Activated T-helper 2 cell treated with anti-CD3 and anti-CD28 coated beads, Interferon-gamma antibody, Interleukin-2, Interleukin-4, amounts not matched to agents 10 μg/mL and 5 μg/mL and 100 μg/mL, durations not matched to agents 14 hours and 24 hours and 36 hours (primary cell): ENCODE measurements at regions of chr12 and their contacts with region 1.

Region 1: DNA sequence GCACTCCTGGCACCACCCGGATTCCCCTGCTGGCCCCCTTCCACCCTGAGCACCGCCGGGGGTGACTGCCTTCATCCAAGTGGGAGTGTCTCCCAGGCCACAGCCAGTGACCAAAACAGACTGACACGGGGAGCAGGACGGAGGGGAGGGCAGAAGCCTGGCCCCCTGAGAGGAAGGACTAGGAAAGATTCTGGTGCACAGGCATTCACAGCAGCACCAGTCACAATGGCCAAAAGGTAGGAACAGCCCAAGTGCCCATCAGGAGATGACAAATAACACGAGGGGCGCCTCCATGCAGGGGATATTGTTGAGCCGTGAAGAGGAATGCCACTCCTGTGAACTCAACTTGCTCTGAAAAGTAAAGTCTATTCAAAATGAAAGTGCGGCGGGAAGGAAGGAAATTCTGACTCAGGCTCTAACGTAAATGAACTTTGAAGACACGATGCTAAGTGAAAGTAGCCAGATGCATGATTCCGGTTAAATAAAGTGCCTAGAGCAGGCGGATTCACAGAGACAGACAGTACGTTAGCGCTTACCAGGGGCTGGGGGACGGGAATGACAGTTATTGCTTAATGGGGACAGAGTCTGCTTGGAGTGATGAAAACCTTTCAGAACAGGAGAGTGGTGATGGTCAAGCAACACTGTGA is 146.1 kb upstream of the NCOR2 start:
- DNase-seq: peak; percentile 58
- H3K4me3 Mint-ChIP-seq: peak overlapping the region; percentile 56
- H3K27ac Mint-ChIP-seq: peak overlapping the region; percentile 86
- H3K4me1 Mint-ChIP-seq: peaks cover 17% of the 10 kb centered on the region
- H3K27me3 Mint-ChIP-seq: peaks cover 1% of the 10 kb centered on the region

Region 2: DNA sequence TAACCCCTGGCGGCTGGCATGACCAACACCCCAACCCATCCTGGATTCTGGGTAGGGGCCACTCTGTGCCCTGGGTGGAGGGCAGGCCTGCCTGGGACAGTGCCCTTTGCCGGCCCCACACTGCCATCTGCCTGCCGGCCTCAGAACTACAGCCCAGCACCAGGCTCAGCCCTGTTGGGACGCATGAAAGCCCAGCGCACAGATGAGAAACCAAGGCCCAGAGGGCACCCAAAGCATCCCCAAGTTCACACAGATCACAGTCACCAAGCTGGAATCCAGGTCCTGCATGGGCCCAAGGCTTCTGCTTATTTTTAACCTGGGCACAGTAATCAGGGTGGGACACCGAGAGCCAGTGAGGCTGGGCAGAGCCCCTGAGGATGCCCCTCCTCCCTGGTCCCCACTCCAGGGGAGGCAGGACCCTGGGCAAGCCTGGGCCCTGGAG is 392.5 kb before region 1 on chr12:
- intact Hi-C with region 1: no loop called
- DNase-seq: peak; percentile 53
- H3K4me3 Mint-ChIP-seq: no peak overlapping the region
- H3K27ac Mint-ChIP-seq: no peak overlapping the region
- H3K4me1 Mint-ChIP-seq: no peaks in the 10 kb centered on the region
- H3K27me3 Mint-ChIP-seq: no peaks in the 10 kb centered on the region

Region 3: GRCh38 chr12:124338436-124338835 is 375.1 kb before region 1 on chr12:
- intact Hi-C with region 1: no loop called
- DNase-seq: no peak
- H3K4me3 Mint-ChIP-seq: no peak overlapping the region
- H3K27ac Mint-ChIP-seq: peak overlapping the region; percentile 50
- H3K4me1 Mint-ChIP-seq: no peaks in the 10 kb centered on the region
- H3K27me3 Mint-ChIP-seq: no peaks in the 10 kb centered on the region

Region 4: GRCh38 chr12:124453419-124454351 is 259.9 kb before region 1 on chr12:
- intact Hi-C with region 1: loop called (anchors 1 kb)
- DNase-seq: peak; percentile 76
- H3K4me3 Mint-ChIP-seq: peak overlapping the region; percentile 51
- H3K27ac Mint-ChIP-seq: peak overlapping the region; percentile 67
- H3K4me1 Mint-ChIP-seq: peaks cover 35% of the 10 kb centered on the region
- H3K27me3 Mint-ChIP-seq: no peaks in the 10 kb centered on the region

Region 5: GRCh38 chr12:124567661-124568373 is 145.7 kb before region 1 on chr12:
- intact Hi-C with region 1: loop called (anchors 1 kb)
- DNase-seq: peak; percentile 75
- H3K4me3 Mint-ChIP-seq: peak overlapping the region; percentile 78
- H3K27ac Mint-ChIP-seq: peak overlapping the region; percentile 78
- H3K4me1 Mint-ChIP-seq: peaks cover 10% of the 10 kb centered on the region
- H3K27me3 Mint-ChIP-seq: peaks cover 3% of the 10 kb centered on the region

Region 6: GRCh38 chr12:124599074-124599999 is 114.2 kb before region 1 on chr12:
- intact Hi-C with region 1: loop called (anchors 2 kb)
- DNase-seq: no peak
- H3K4me3 Mint-ChIP-seq: no peak overlapping the region
- H3K27ac Mint-ChIP-seq: peak overlapping the region; percentile 20
- H3K4me1 Mint-ChIP-seq: peaks cover 8% of the 10 kb centered on the region
- H3K27me3 Mint-ChIP-seq: peaks cover 41% of the 10 kb centered on the region

Region 7: DNA sequence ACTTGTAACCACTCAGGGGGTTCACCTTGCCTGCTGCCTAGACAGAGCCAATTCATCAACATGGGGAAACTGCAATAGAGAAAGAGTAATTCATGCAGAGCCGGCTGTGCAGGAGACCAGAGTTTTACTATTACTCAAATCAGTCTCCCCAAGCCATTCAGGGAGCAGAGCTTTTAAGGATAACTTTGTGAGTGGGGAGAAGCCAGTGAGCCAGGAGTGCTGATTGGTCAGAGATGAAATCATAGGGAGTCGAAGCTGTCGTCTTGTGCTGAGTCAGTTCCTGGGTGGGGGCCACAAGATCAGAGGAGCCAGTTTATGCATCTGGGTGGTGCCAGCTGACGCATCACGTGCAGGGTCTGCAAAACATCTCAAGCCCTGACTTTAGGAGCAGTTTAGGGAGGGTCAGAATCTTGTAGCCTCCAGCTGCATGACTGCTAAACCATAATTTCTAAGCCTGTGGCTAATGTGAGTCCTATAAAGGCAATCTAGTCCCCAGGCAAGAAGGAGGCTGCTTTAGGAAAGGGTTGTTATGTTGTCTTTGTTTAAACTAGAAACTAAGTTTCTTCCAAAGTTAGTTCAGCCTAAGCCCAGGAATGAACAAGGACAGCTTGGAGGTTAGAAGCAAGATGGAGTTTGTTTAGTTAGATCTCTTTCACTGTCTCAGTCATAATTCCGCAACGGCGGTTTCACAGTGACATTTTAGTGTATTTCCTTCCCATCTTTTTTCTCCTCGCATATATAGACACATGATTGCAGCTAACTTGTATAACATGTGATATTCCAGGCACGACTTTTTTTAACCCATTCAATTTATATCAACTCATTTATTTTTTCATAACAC is 77.2 kb before region 1 on chr12:
- intact Hi-C with region 1: loop called (anchors 1 kb)
- DNase-seq: peak; percentile 55
- H3K4me3 Mint-ChIP-seq: no peak overlapping the region
- H3K27ac Mint-ChIP-seq: no peak overlapping the region
- H3K4me1 Mint-ChIP-seq: peaks cover 10% of the 10 kb centered on the region
- H3K27me3 Mint-ChIP-seq: peaks cover 11% of the 10 kb centered on the region

Region 8: DNA sequence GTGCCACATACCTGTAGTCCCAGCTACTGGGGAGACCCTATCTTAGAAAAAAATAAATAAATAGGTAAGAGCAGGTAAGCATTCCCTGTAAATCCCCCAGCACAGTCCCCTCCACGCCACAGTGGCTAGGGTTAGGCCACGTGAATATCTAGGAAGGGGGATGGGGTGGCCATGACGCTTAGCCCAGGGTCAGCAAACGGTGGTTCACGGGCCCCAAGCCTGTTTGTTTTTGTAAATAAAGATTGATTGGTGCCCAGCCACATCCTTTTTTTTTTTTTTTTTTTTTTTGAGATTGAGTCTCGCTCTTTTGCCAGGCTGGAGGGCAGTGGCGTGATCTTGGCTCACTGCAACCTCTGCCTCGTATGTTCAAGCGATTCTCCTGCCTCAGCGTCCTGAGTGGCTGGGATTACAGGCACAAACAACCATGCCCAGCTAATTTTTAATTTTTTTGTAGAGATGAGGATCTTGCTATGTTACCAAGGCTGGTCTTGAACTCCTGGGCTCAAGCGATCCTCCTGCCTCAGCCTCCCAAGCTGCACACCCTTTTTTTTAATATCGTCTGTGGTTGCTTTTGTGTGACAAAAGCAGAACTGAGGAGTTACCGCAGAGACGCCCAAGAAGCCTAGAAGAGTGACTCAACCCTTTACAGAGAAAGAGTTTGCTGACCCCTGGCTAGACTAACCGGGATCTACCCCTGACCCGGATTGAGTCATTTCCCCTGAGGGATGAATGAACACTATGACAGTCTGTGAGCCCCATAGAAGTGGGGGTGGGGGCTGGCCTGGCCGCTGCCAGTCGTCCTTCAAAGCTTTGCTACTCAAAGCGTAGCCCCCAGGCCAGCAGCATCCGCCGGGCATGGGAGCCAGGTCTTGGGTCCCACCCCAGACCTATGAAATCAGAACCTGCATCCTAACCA is 32.4 kb before region 1 on chr12:
- intact Hi-C with region 1: loop called (anchors 1 kb)
- DNase-seq: peak; percentile 16
- H3K4me3 Mint-ChIP-seq: no peak overlapping the region
- H3K27ac Mint-ChIP-seq: no peak overlapping the region
- H3K4me1 Mint-ChIP-seq: peaks cover 30% of the 10 kb centered on the region
- H3K27me3 Mint-ChIP-seq: peaks cover 1% of the 10 kb centered on the region

Region 9: GRCh38 chr12:124694846-124695497 is 18.6 kb before region 1 on chr12:
- intact Hi-C with region 1: loop called (anchors 1 kb)
- DNase-seq: no peak
- H3K4me3 Mint-ChIP-seq: no peak overlapping the region
- H3K27ac Mint-ChIP-seq: no peak overlapping the region
- H3K4me1 Mint-ChIP-seq: peaks cover 7% of the 10 kb centered on the region
- H3K27me3 Mint-ChIP-seq: peaks cover 17% of the 10 kb centered on the region